Breast epithelium (tissue), 4 donors: ENCODE measurements at regions of chr4 and their contacts with region 1.

Region 1: GRCh38 chr4:182483685-182484084 is 240.5 kb downstream of the TENM3 start:
- DNase-seq: no peak
- H3K4me3 ChIP-seq: no peak overlapping the region
- H3K27ac ChIP-seq: no peak overlapping the region
- H3K4me1 ChIP-seq: no peaks in the 10 kb centered on the region
- H3K27me3 ChIP-seq: no peaks in the 10 kb centered on the region
- CTCF ChIP-seq: no peak
- POLR2A ChIP-seq: no peak

Region 2: GRCh38 chr4:182238355-182238931 is 245.2 kb before region 1 on chr4:
- intact Hi-C with region 1: loop called (anchors 5 kb)
- DNase-seq: no peak
- H3K4me3 ChIP-seq: no peak overlapping the region
- H3K27ac ChIP-seq: no peak overlapping the region
- H3K4me1 ChIP-seq: no peaks in the 10 kb centered on the region
- H3K27me3 ChIP-seq: no peaks in the 10 kb centered on the region
- CTCF ChIP-seq: no peak
- POLR2A ChIP-seq: no peak

Region 3: DNA sequence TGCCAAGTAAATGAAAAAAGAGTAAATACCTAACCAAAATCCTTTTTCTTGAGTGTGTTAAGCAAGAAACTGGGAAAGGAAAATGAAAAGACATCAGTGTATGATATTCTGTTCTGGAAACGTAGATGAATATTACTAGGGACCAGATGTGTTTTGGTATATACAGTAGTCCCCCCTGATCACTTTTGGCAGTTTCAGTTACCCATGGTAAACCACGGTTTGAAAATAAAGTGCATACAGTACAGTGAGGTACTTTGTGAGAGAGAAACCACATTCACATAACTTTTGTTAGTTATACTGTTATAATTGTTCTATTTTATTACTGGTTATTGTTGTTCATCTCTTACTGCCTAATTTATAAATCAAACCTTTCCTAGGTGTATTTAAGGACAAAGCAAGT is 10.4 kb after region 1 on chr4:
- intact Hi-C with region 1: no loop called
- DNase-seq: no peak
- H3K4me3 ChIP-seq: no peak overlapping the region
- H3K27ac ChIP-seq: no peak overlapping the region
- H3K4me1 ChIP-seq: no peaks in the 10 kb centered on the region
- H3K27me3 ChIP-seq: no peaks in the 10 kb centered on the region
- CTCF ChIP-seq: no peak
- POLR2A ChIP-seq: no peak